Left cardiac atrium (tissue), 4 donors: ENCODE measurements at regions of chr5 and their contacts with region 1.

Region 1: GRCh38 chr5:43729846-43730478 is 127.0 kb downstream of the NNT start:
- DNase-seq: no peak
- ATAC-seq: no peak

Region 2: GRCh38 chr5:44332285-44332971 is 602.5 kb after region 1 on chr5:
- intact Hi-C with region 1: loop called (anchors 2 to 5 kb)
- DNase-seq: no peak
- ATAC-seq: peak; percentile 21 to 65

Region 3: GRCh38 chr5:44774279-44774880 is 1044.4 kb after region 1 on chr5:
- intact Hi-C with region 1: loop called in 1 of 2 experiments (anchors 5 kb)
- DNase-seq: no peak
- ATAC-seq: no peak